ENCODE measurements at regions of chr11 and their contacts with region 1.

Region 1: GRCh38 chr11:39139581-39139980 is 2319.9 kb downstream of the LRRC4C start:
- DNase-seq: no peak
- ATAC-seq: no peak
- H3K4me3 Mint-ChIP-seq: no peak overlapping the region
- H3K27ac Mint-ChIP-seq: no peak overlapping the region
- H3K4me1 Mint-ChIP-seq: no peaks in the 10 kb centered on the region
- H3K27me3 Mint-ChIP-seq: no peaks in the 10 kb centered on the region

Region 2: GRCh38 chr11:37727371-37727770 is 1412.2 kb before region 1 on chr11:
- CTCF ChIA-PET with region 1: no interaction called
- POLR2A ChIA-PET with region 1: no interaction called
- intact Hi-C with region 1: loop called in 1 of 2 experiments (anchors 5 kb)
- DNase-seq: no peak
- ATAC-seq: no peak
- H3K4me3 Mint-ChIP-seq: no peak overlapping the region
- H3K27ac Mint-ChIP-seq: no peak overlapping the region
- H3K4me1 Mint-ChIP-seq: no peaks in the 10 kb centered on the region
- H3K27me3 Mint-ChIP-seq: no peaks in the 10 kb centered on the region

Region 3: DNA sequence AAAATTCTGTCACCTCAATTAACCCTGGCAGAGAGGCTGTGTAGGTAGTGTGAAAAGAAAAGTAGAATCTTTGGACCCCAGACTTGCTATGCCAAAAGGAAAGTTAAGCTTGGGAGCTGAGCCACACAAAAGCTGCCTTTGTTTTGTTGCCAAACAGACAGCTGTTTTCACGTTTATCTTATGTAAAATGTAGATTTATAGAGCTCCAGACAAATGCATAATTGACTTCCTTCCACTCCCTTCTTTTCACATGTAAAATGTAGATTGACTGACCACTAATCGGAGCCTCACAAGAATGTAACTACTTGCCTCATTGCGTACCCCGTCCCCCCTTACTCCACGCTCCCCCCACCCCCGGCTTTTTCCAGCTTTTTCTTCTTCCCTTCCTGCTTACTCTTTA is 239.4 kb before region 1 on chr11:
- CTCF ChIA-PET with region 1: no interaction called
- POLR2A ChIA-PET with region 1: no interaction called
- intact Hi-C with region 1: no loop called
- DNase-seq: no peak
- ATAC-seq: no peak
- H3K4me3 Mint-ChIP-seq: no peak overlapping the region
- H3K27ac Mint-ChIP-seq: no peak overlapping the region
- H3K4me1 Mint-ChIP-seq: no peaks in the 10 kb centered on the region
- H3K27me3 Mint-ChIP-seq: no peaks in the 10 kb centered on the region

Region 4: GRCh38 chr11:39165021-39165420 is 25.4 kb after region 1 on chr11:
- CTCF ChIA-PET with region 1: no interaction called
- POLR2A ChIA-PET with region 1: no interaction called
- intact Hi-C with region 1: no loop called
- DNase-seq: no peak
- ATAC-seq: no peak
- H3K4me3 Mint-ChIP-seq: no peak overlapping the region
- H3K27ac Mint-ChIP-seq: no peak overlapping the region
- H3K4me1 Mint-ChIP-seq: no peaks in the 10 kb centered on the region
- H3K27me3 Mint-ChIP-seq: no peaks in the 10 kb centered on the region

Region 5: GRCh38 chr11:39192671-39193070 is 53.1 kb after region 1 on chr11:
- CTCF ChIA-PET with region 1: no interaction called
- POLR2A ChIA-PET with region 1: no interaction called
- intact Hi-C with region 1: no loop called
- DNase-seq: no peak
- ATAC-seq: no peak
- H3K4me3 Mint-ChIP-seq: no peak overlapping the region
- H3K27ac Mint-ChIP-seq: no peak overlapping the region
- H3K4me1 Mint-ChIP-seq: no peaks in the 10 kb centered on the region
- H3K27me3 Mint-ChIP-seq: no peaks in the 10 kb centered on the region

Region 6: DNA sequence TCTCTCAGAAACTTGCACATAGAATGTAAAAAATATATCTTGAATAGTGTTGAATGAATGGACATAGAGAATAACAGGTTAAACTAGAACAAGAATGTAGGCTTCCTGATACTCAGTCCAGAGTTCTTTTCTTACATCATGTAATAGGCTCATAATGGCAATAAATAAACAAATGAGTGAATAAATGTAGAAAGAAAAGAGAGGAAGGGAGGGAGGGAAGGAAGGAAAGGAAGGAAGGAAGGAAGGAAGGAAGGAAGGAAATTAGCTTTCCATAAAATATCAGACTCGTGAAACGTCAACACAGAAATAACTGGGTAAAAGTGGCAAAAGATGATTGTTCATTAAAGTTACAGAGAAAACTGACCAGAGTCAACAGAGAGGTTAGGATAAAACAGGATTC is 318.9 kb after region 1 on chr11:
- CTCF ChIA-PET with region 1: no interaction called
- POLR2A ChIA-PET with region 1: no interaction called
- intact Hi-C with region 1: no loop called
- DNase-seq: no peak
- ATAC-seq: no peak
- H3K4me3 Mint-ChIP-seq: no peak overlapping the region
- H3K27ac Mint-ChIP-seq: no peak overlapping the region
- H3K4me1 Mint-ChIP-seq: no peaks in the 10 kb centered on the region
- H3K27me3 Mint-ChIP-seq: no peaks in the 10 kb centered on the region

Measured in activated CD4-positive, alpha-beta T cell treated with anti-CD3 and anti-CD28 coated beads for 36 hours (primary cell).